Dorsolateral prefrontal cortex (tissue), 120 donors: ENCODE measurements at regions of chr9 and their contacts with region 1.

Region 1: DNA sequence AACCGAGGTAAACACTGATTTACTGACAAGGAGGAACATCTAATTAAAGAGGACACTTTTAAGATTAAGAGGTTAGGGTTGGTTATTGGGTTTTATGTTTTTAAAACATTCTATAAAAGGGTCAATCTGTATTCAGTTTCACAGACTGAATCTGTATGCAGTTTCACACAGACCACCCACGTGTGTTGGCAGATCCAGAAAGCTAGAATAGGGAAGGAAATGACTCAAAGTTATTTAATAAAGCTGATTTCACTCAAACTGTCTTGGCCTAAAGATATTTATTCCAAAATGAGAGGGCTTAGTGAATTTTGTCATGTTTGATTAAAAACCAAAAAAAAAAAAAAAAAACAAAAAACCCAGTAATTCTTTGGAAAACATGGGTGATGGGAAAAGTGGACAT is 140.2 kb downstream of the SLC24A2 start:
- DNase-seq: peak in 1 of 10 donors; percentile 39
- H3K4me3 ChIP-seq: no peak overlapping the region
- H3K27ac ChIP-seq: peak overlapping the region in 52 of 59 donors; percentile 6 to 92 (median 73)
- H3K27me3 ChIP-seq: no peaks in the 10 kb centered on the region
- CTCF ChIP-seq: no peak

Region 2: GRCh38 chr9:19554529-19554928 is 94.1 kb before region 1 on chr9:
- intact Hi-C with region 1: no loop called
- DNase-seq: no peak
- H3K4me3 ChIP-seq: no peak overlapping the region
- H3K27ac ChIP-seq: peak overlapping the region in 46 of 59 donors; percentile 10 to 91 (median 76)
- H3K27me3 ChIP-seq: no peaks in the 10 kb centered on the region
- CTCF ChIP-seq: no peak

Region 3: DNA sequence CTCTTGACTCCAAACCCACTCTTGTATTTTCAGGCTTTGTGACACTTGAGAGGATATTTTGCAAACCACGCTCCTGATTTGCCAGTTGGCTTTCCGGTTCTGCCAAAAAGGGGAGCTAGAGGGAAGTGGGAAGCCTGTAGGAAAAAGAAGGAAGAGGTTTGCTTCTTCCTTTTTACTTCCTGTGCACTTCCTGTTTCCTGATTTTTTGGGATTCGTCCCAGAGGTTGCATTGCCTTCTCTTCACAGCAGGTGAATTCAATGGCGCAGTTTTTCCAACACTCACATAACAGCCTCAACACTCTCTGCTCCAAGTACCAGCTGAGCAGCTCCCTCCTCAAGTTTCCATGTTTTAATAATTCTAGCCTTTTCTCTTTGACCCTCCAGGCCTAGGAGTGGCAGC is 92.5 kb after region 1 on chr9:
- intact Hi-C with region 1: no loop called
- DNase-seq: no peak
- H3K4me3 ChIP-seq: no peak overlapping the region
- H3K27ac ChIP-seq: peak overlapping the region in 21 of 59 donors; percentile 0 to 63 (median 30)
- H3K27me3 ChIP-seq: no peaks in the 10 kb centered on the region
- CTCF ChIP-seq: no peak

Region 4: DNA sequence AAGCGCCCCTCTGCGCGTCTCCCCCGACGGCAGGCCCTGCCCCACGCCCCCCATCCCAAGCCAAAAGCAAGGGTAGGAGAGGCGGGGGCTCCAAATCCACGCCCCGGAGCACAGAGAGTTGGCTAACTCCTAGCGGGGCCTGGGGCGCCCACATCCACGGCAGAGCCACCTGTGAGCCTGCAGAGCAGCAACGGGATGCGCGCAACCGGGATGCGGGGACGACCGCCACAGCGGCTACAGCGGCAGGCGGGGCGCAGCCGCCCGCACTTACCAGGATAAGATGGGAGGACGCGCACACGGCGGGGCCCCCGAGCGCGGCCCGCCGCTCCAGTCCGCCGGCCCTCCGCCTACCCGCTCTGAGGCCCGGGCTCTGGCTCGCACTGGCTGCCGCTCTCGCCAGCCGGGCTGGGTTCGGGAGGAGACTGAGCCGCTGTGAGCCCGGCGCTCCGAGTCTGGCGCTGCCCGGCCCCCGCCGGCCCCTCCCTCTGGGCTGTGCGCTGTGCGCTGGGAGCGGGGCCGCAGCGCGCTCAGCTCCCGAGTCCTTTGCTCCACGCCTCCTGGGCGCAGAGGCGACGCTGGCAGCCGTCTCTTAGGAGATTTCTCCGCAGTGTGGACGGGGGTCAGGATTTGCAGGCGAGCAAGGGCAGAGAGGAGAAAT is 140.1 kb after region 1 on chr9 and contains the start of gene SLC24A2:
- intact Hi-C with region 1: loop called (anchors 5 to 10 kb)
- DNase-seq: peak; percentile 28 to 86 (median 70)
- H3K4me3 ChIP-seq: peak within 1 kb of the TSS; percentile 53 to 89 (median 77)
- H3K27ac ChIP-seq: peak within 1 kb of the TSS; percentile 60 to 98 (median 95)
- H3K27me3 ChIP-seq: peaks cover 0 to 12% (median 0%) of the 10 kb centered on the region in 45 donors
- CTCF ChIP-seq: peak in 10 of 56 donors; percentile 5 to 41 (median 13)
- total RNA-seq, gene SLC24A2: 72.9 to 391 (median 239) TPM

Region 5: DNA sequence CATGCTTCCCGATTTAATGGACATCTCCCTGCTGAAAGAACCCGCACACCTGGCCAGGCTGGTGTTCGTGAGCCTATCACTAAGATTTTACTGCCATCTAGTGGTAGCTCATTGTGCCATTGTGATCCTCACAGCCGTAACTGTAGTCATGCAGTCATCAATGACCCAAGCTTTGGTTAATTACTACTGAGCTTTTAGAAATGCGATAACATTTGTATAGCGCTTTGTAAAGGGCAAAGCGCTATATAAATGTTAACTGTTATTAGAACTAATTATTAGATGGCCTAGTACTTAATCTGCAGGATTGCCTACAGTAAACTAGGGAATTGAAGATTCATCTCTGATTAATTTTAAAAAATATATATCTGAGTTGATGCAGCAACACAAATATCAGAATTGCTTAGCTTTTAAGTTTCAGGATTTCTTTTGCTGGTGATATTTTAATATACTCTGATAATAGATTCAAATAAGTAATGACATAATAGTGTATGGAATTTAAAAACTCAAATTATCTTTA is 1292.6 kb after region 1 on chr9:
- intact Hi-C with region 1: loop called in 1 of 2 experiments (anchors 10 kb)
- DNase-seq: peak in 6 of 10 donors; percentile 30 to 63 (median 44)
- H3K4me3 ChIP-seq: no peak overlapping the region
- H3K27ac ChIP-seq: no peak overlapping the region
- H3K27me3 ChIP-seq: no peaks in the 10 kb centered on the region
- CTCF ChIP-seq: peak; percentile 57 to 98 (median 89)